GM23248 (cell line): ENCODE measurements at regions of chr17 and their contacts with region 1.

Region 1: GRCh38 chr17:70767102-70767701 is 597.9 kb downstream of the KCNJ2 start:
- DNase-seq: peak; percentile 61
- H3K4me3 ChIP-seq: no peak overlapping the region
- H3K27ac ChIP-seq: no peak overlapping the region
- H3K4me1 ChIP-seq: no peaks in the 10 kb centered on the region
- H3K27me3 ChIP-seq: no peaks in the 10 kb centered on the region

Region 2: GRCh38 chr17:70390049-70390448 is 377.2 kb before region 1 on chr17:
- in situ Hi-C with region 1: no loop called
- DNase-seq: no peak
- H3K4me3 ChIP-seq: no peak overlapping the region
- H3K27ac ChIP-seq: no peak overlapping the region
- H3K4me1 ChIP-seq: no peaks in the 10 kb centered on the region
- H3K27me3 ChIP-seq: no peaks in the 10 kb centered on the region

Region 3: DNA sequence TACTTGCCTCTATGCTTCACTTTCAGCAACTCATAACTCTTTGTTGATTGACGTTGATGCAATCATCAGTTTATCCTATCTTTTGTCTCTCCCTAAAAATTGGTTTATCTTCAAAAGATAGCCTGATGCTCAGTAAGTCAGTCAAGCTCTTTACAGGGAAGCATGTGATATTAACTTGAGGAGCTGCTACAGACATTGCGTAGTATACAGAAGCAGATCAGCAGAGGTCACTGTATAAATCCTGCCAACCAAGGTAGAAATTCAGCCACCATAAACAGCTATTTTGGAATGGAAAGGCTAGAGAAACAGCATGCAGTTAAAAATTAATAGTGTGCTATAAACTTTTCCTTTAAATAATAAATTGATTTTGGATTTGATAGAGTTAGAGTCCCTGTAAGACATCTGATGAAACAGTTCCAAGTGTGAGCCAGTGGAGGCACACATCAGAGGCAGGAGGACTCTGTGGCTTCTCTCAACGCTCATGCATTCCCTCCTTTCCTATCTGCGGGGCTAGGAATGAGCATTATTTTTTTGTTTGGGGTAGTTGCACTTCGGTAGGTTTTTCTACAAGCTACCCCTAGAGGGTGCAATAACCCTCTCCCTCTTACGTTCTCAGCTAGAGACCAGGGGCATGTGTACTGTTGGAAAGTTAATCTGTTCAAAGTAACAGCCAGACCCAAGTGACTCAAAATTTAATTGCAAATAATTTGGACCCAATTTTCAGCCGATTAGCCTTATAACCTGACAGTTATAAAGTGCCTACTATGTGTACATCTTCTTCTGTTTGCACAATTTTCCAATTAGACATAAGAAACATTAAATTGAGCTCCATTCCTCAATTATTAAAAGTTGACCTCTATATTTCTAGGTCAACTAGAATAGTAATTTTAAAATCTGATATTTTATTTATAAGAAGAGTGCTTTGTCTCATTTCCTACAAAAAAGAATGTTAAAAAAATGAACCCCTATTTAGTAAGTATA is 705.9 kb after region 1 on chr17:
- in situ Hi-C with region 1: loop called (anchors 25 kb)
- DNase-seq: peak; percentile 79
- H3K4me3 ChIP-seq: no peak overlapping the region
- H3K27ac ChIP-seq: no peak overlapping the region
- H3K4me1 ChIP-seq: peaks cover 9% of the 10 kb centered on the region; the same call in 1 of the 2 replicates
- H3K27me3 ChIP-seq: no peaks in the 10 kb centered on the region